ENCODE measurements at regions of chr1 and their contacts with region 1.

Region 1: GRCh38 chr1:174968750-174969244 is 30.9 kb upstream of the CACYBP start:
- DNase-seq: peak; percentile 58
- ATAC-seq: peak; percentile 53
- H3K4me3 Mint-ChIP-seq: peak overlapping the region; percentile 53
- H3K27ac Mint-ChIP-seq: peak overlapping the region; percentile 80
- H3K4me1 Mint-ChIP-seq: peaks cover 77% of the 10 kb centered on the region
- H3K27me3 Mint-ChIP-seq: no peaks in the 10 kb centered on the region

Region 2: DNA sequence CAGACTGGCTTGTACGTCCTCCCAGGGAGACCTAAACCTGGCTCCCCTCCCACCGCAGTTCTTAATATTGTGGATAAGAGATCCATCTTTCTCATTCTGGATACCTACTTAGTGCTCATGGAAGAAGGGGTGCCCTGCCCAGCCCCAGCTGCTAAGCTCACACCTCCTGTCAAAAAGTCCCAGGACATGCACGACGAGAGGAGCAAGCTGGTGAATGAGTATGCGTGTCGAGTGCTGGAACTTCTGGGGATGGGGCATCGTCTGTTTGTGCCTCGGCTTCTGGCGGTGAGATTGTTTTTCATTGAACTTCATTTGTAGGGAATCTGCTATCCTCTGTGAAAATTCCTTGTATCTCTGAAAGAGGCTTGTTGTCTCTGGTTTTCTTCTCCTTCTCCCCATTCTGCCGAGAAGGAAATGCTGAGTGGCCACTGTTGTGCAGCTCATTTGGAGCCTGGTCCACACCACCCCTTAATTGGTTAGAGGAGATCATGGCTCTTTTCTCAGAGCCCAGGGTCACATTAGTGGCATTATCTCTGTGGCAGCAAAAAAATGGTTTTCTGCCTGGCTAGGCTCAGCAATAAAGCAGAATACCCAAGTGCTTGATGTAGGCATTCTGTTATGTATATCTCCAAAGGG is 168.5 kb before region 1 on chr1:
- CTCF ChIA-PET with region 1: interaction called, 8 read pairs
- POLR2A ChIA-PET with region 1: interaction called, 14 read pairs
- DNase-seq: peak; percentile 23
- ATAC-seq: peak; percentile 24
- H3K4me3 Mint-ChIP-seq: no peak overlapping the region
- H3K27ac Mint-ChIP-seq: no peak overlapping the region
- H3K4me1 Mint-ChIP-seq: peaks cover 5% of the 10 kb centered on the region
- H3K27me3 Mint-ChIP-seq: no peaks in the 10 kb centered on the region

Region 3: DNA sequence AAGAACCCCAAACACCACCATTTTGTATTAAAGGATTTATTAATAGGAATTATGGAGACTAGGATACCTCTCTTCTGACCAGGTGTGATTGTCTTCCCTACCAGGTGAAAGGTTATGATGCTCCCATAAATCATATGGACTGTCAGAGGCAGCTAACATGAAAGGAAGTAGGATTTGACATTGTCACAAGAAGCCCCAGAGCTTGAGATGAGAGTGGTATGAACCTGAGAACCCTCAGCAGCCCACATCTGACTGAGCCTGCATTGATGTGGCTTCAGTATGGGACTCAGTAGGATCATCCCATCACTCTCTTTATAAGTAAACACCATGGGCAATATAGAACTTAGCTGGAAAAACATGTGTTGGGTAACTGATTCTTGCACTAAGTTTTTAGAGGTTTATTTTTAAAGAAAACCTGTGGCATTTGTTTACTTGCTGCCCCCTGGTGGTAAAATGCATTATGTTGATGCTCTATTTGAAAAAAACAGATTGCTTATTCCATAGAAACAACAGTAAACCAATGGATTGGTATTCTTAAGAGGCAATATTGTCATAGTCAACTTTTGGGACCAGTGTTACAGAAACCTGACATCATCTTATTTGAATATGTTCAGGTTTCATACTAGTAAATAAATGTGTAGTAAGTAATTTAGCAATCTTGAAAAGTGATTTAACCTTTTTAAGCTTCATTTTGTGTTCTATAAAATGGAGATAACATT is 14.3 kb after region 1 on chr1:
- CTCF ChIA-PET with region 1: interaction called, 146 read pairs
- POLR2A ChIA-PET with region 1: interaction called, 5 read pairs
- DNase-seq: peak; percentile 66
- ATAC-seq: no peak
- H3K4me3 Mint-ChIP-seq: no peak overlapping the region
- H3K27ac Mint-ChIP-seq: no peak overlapping the region
- H3K4me1 Mint-ChIP-seq: peaks cover 16% of the 10 kb centered on the region
- H3K27me3 Mint-ChIP-seq: no peaks in the 10 kb centered on the region

Region 4: DNA sequence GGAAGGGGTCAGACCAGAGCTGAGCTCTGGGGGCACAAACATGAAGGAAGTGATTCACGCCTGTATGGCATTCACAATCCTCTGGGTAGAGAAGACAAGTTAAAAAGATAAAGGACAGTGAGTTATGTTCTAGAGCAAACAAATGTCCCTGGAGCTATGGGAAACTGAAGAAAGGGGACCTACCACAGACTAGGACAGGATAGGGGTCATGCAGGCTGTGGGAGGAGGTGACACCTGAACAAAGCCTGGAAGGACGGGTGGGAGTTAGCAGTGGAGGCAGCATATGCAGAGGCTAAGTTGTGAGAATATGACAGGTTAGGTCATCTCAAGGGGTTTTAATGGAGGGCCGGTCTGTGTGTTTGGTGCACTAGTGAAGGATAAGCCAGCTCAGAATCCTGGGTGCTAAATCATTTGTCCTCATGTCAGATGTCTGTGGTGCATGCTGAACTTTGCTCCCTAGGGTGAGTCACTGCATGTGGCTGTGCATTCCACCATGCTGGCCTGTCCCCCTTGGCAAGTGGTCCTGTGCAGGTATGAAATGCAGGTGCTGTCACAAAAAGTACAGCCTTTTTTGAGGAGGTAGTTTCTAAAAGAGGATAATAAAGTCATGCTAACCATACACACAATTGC is 127.3 kb after region 1 on chr1:
- CTCF ChIA-PET with region 1: no interaction called
- POLR2A ChIA-PET with region 1: no interaction called
- DNase-seq: no peak
- ATAC-seq: no peak
- H3K4me3 Mint-ChIP-seq: no peak overlapping the region
- H3K27ac Mint-ChIP-seq: no peak overlapping the region
- H3K4me1 Mint-ChIP-seq: no peaks in the 10 kb centered on the region
- H3K27me3 Mint-ChIP-seq: peaks cover 3% of the 10 kb centered on the region

Region 5: GRCh38 chr1:175124861-175125260 is 156.1 kb after region 1 on chr1:
- CTCF ChIA-PET with region 1: no interaction called
- POLR2A ChIA-PET with region 1: no interaction called
- DNase-seq: no peak
- ATAC-seq: no peak
- H3K4me3 Mint-ChIP-seq: no peak overlapping the region
- H3K27ac Mint-ChIP-seq: no peak overlapping the region
- H3K4me1 Mint-ChIP-seq: no peaks in the 10 kb centered on the region
- H3K27me3 Mint-ChIP-seq: no peaks in the 10 kb centered on the region

Region 6: DNA sequence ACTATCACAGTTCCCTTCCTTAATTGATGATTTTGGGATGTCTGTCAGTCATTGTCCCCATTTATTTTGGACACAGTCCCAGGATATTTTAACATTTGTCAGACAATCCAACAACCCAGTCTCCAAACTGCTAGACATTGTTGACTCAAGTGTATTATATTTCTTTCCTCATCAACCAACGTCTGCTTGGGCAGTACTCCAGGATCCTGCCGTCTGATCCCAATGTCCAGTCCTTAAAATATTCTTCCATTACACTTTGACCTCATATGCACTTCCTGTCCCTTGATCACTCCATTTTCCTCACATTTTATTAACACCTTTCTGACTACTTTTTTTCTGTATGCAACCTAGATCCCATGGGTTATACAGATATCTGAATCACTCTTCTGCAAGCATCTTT is 263.5 kb after region 1 on chr1:
- CTCF ChIA-PET with region 1: no interaction called
- POLR2A ChIA-PET with region 1: no interaction called
- DNase-seq: no peak
- ATAC-seq: no peak
- H3K4me3 Mint-ChIP-seq: no peak overlapping the region
- H3K27ac Mint-ChIP-seq: no peak overlapping the region
- H3K4me1 Mint-ChIP-seq: peaks cover 27% of the 10 kb centered on the region
- H3K27me3 Mint-ChIP-seq: no peaks in the 10 kb centered on the region

Measured in activated CD8-positive, alpha-beta T cell treated with anti-CD3 and anti-CD28 coated beads, Interleukin-2, amount 10 ng/mL, durations not matched to agents 7 days and 5 days (primary cell).